Activated naive CD8-positive, alpha-beta T cell treated with anti-CD3 and anti-CD28 coated beads, Interleukin-2, amount 10 ng/mL, durations not matched to agents 7 days and 5 days (primary cell): ENCODE measurements at regions of chr17 and their contacts with region 1.

Region 1: DNA sequence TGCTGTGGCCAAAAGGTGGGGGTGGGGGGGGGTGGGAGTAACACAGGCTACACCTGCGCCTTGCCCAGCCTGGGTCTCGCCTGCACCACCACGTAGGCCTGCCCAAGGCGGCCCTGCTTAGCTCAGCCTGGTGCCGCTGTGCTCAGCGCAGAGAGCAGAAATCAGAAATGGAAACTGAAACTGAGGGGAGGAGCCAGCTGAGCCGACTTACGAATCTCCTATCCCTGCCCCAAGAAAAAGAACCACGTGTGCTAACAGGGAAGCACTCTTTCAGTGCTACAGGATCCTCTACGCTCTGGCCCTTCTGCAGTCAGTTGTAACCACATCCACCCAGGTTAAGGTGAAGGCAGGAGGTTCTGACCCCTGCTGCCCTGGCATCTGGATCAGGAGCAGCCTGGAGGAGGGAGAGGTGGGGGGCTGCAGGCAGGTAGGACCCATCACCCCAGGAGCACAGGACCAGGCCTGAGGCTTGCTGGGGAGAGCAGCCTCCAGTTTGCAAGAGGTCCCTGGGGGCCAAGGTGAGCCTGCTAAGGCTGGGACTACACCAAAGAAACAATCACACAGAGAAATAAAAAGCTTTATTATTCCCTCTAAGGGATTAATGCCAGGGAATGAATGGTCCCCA is at the start of gene DHX58:
- DNase-seq: peak; percentile 75
- ATAC-seq: peak; percentile 81
- H3K4me3 Mint-ChIP-seq: peak within 1 kb of the TSS; percentile 88
- H3K27ac Mint-ChIP-seq: peak within 1 kb of the TSS; percentile 97
- H3K4me1 Mint-ChIP-seq: peaks cover 37% of the 10 kb centered on the region
- H3K27me3 Mint-ChIP-seq: no peaks in the 10 kb centered on the region
- total RNA-seq, gene DHX58: 68.7 to 77.6 TPM

Region 2: DNA sequence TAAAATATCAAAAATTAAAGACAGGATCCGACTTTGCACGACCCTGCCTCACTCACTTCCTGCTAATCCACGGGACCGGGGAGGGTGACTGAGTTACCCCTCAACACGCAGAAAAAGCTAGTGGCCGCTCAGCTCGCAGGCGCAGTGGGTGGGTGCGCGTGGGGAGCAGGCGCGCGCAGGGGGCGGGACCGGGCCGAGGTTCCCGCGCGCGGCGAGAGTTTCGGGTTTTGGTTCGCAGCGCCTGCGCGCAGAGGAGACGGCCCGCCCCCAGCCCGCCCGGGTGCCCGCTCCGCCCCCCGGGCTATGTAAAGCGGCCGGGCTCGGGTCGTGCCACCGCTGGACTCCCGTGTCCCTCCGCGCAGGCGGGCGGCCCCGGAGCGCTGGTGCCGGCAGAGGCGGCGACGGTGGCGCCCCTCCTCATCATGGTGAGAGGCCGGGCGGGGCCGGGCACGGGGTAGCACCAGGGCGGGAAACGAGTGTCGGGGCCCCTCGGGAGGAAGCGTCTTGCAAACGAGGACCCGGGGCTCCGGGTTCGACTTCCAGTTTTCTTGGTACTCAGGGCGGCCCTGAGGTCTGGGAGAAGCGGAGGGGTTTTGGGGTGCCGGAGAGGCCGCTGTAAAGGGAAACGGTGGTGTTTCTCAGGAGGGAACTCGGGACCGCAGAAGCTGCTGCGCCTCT is 146.1 kb before region 1 on chr17 and contains the start of gene CNP:
- POLR2A ChIA-PET with region 1: interaction called, 45 read pairs
- DNase-seq: peak; percentile 96
- ATAC-seq: peak; percentile 77
- H3K4me3 Mint-ChIP-seq: peak within 1 kb of the TSS; percentile 87
- H3K27ac Mint-ChIP-seq: peak within 1 kb of the TSS; percentile 86
- H3K4me1 Mint-ChIP-seq: peaks cover 28% of the 10 kb centered on the region
- H3K27me3 Mint-ChIP-seq: peaks cover 2% of the 10 kb centered on the region
- total RNA-seq, gene CNP: 75.8 to 83.0 TPM

Region 3: DNA sequence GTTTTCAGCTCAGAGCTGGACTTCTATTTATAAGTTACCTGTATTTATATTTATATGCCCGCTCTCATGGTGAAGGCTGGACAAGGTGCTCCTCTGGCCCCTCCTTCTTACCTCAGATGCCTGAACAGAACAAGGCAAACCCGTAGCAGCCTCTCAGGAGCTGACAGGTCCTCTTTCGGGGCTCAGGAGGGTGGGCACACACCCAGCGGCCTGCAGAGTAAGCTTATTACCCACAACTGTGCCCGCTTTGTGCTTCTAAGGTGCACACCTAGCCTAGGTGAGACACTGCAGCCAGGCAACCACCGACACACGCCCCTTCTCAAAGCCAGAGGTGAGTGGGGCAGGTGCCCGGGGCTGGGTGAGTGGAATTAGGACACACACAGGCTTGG is 87.5 kb before region 1 on chr17:
- POLR2A ChIA-PET with region 1: interaction called, 108 read pairs
- DNase-seq: no peak
- ATAC-seq: no peak
- H3K4me3 Mint-ChIP-seq: no peak overlapping the region
- H3K27ac Mint-ChIP-seq: peak overlapping the region; percentile 37
- H3K4me1 Mint-ChIP-seq: peaks cover 17% of the 10 kb centered on the region
- H3K27me3 Mint-ChIP-seq: no peaks in the 10 kb centered on the region

Region 4: GRCh38 chr17:42065201-42065600 is 47.5 kb before region 1 on chr17:
- POLR2A ChIA-PET with region 1: interaction called, 12 read pairs
- DNase-seq: no peak
- ATAC-seq: peak; percentile 53
- H3K4me3 Mint-ChIP-seq: peak overlapping the region; percentile 16
- H3K27ac Mint-ChIP-seq: peak overlapping the region; percentile 85
- H3K4me1 Mint-ChIP-seq: peaks cover 18% of the 10 kb centered on the region
- H3K27me3 Mint-ChIP-seq: no peaks in the 10 kb centered on the region

Region 5: GRCh38 chr17:42101513-42102319 is 10.9 kb before region 1 on chr17:
- POLR2A ChIA-PET with region 1: interaction called, 28 read pairs
- DNase-seq: peak; percentile 80
- ATAC-seq: peak; percentile 58
- H3K4me3 Mint-ChIP-seq: no peak overlapping the region
- H3K27ac Mint-ChIP-seq: no peak overlapping the region
- H3K4me1 Mint-ChIP-seq: peaks cover 8% of the 10 kb centered on the region
- H3K27me3 Mint-ChIP-seq: peaks cover 15% of the 10 kb centered on the region